ENCODE measurements at regions of chr3 and their contacts with region 1.

Region 1: GRCh38 chr3:120348981-120349818 is at the start of gene LRRC58:
- DNase-seq: peak; percentile 87
- H3K4me3 Mint-ChIP-seq: peak within 1 kb of the TSS; percentile 92
- H3K27ac Mint-ChIP-seq: peak within 1 kb of the TSS; percentile 88
- H3K4me1 Mint-ChIP-seq: peaks cover 46% of the 10 kb centered on the region
- H3K27me3 Mint-ChIP-seq: peaks cover 26% of the 10 kb centered on the region
- total RNA-seq, gene LRRC58: 26.9 and 27.4 TPM in 2 replicates

Region 2: GRCh38 chr3:119463171-119464169 is 885.7 kb before region 1 on chr3 and contains the start of gene TMEM39A:
- intact Hi-C with region 1: loop called (anchors 10 kb)
- DNase-seq: peak; percentile 98
- H3K4me3 Mint-ChIP-seq: peak within 1 kb of the TSS; percentile 98
- H3K27ac Mint-ChIP-seq: peak within 1 kb of the TSS; percentile 97
- H3K4me1 Mint-ChIP-seq: peaks cover 49% of the 10 kb centered on the region
- H3K27me3 Mint-ChIP-seq: peaks cover 3% of the 10 kb centered on the region
- total RNA-seq, gene TMEM39A: 51.3 and 56.9 TPM in 2 replicates

Region 3: GRCh38 chr3:119702530-119703157 is 646.6 kb before region 1 on chr3 and contains the start of gene CFAP91:
- intact Hi-C with region 1: loop called (anchors 5 kb)
- DNase-seq: peak; percentile 78
- H3K4me3 Mint-ChIP-seq: peak within 1 kb of the TSS; percentile 67
- H3K27ac Mint-ChIP-seq: no peak within 1 kb of the TSS
- H3K4me1 Mint-ChIP-seq: peaks cover 37% of the 10 kb centered on the region
- H3K27me3 Mint-ChIP-seq: peaks cover 29% of the 10 kb centered on the region
- total RNA-seq, gene CFAP91: 0.24 TPM in 1 of 2 replicates, not detected in the other

Region 4: DNA sequence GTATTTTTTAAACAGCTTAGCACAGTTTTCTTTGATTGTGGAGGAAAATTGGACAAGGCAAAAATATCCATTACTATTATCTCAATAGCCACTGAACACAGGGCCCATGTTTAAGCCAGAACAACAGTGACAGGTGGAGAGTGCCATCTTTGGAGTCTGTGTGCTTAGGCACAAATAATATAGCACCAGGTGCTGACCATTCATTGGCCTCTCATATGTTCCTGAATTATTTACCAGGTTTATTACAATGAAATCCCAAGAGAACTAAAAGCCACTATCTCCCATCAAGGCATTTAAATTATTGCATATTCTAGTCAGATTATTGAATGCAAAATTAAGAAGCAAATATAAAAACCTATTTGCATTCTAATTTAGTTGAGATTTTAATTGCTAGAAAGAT is 103.8 kb before region 1 on chr3:
- intact Hi-C with region 1: loop called (anchors 1 kb)
- DNase-seq: no peak
- H3K4me3 Mint-ChIP-seq: no peak overlapping the region
- H3K27ac Mint-ChIP-seq: no peak overlapping the region
- H3K4me1 Mint-ChIP-seq: no peaks in the 10 kb centered on the region
- H3K27me3 Mint-ChIP-seq: peaks cover 26% of the 10 kb centered on the region

Region 5: DNA sequence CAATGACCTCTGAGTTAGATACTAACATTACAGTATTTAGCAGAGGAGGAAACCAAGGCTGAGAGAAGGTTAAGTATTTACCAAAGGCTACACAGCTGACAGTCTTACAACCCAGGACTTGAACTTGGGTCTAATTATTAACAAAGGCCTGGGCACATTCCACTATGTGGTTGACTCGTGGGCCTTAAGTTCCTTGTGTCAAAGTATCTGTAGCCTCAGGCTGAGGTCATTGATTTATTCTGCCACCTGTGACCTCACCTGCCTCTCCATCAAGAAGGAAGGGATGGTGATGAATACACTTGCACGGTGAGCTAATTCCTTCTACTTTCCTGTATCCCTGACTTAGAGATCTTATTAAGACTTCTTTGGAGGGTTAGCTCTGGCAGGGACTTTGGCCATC is 19.8 kb after region 1 on chr3:
- intact Hi-C with region 1: no loop called
- DNase-seq: no peak
- H3K4me3 Mint-ChIP-seq: no peak overlapping the region
- H3K27ac Mint-ChIP-seq: no peak overlapping the region
- H3K4me1 Mint-ChIP-seq: no peaks in the 10 kb centered on the region
- H3K27me3 Mint-ChIP-seq: peaks cover 12% of the 10 kb centered on the region

Region 6: DNA sequence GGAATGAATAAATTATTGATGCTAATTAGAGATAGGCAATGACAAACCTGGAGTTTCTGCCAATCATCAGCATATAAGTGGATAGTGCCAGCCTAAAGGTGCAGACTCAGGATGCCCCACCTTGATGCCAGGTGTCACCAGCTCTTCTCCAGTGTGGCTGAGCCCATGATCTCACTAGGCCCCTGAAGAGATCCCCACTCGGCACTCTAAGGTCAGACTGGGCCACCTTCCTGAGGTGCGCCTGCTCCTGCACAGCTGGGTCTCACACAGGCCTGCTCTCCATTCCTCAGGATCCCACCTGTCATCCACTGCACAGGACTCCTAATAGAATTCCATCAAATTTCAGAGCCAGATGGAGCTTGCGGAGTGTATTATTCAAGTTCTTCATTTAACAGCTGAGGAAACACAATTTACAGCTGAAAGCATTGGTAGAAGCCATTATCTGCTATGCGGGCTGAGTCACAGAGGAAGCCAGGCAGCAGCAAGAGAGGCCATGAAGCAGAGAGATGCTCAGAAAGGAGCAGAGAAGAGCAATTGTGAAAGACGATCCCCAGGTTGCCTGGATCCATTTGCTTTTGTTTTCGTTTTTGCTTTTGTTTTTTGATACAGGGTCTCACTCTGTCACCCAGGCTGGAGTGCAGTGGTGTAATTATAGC is 126.7 kb after region 1 on chr3:
- intact Hi-C with region 1: no loop called
- DNase-seq: no peak
- H3K4me3 Mint-ChIP-seq: no peak overlapping the region
- H3K27ac Mint-ChIP-seq: no peak overlapping the region
- H3K4me1 Mint-ChIP-seq: no peaks in the 10 kb centered on the region
- H3K27me3 Mint-ChIP-seq: no peaks in the 10 kb centered on the region

Region 7: DNA sequence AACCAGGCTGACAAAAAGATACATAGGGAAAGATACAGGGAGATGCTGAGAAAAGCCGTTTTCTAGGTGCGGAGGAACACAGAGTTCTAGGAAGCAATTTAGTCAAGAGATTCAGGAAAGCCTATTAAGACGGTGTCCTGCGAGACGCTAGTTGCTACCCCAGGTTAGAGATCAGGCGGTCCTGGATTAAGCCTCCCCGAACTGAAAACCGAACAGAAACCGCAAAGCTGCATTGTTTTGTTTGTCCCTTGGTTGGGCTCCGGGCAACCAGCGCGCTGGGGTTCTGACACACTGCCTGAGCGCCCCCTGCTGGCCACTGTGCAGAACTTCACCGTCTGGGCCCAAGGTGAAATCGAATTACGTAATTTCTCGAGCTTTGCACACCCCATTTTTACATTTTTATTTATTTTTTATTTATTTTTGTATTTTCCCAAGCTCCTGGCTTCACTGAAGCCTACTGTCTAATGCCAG is 209.6 kb after region 1 on chr3:
- intact Hi-C with region 1: loop called (anchors 2 kb)
- DNase-seq: peak; percentile 81
- H3K4me3 Mint-ChIP-seq: peak overlapping the region; percentile 79
- H3K27ac Mint-ChIP-seq: peak overlapping the region; percentile 68
- H3K4me1 Mint-ChIP-seq: peaks cover 23% of the 10 kb centered on the region
- H3K27me3 Mint-ChIP-seq: peaks cover 2% of the 10 kb centered on the region

Region 8: GRCh38 chr3:120763601-120764000 is 414.4 kb after region 1 on chr3:
- intact Hi-C with region 1: no loop called
- DNase-seq: no peak
- H3K4me3 Mint-ChIP-seq: no peak overlapping the region
- H3K27ac Mint-ChIP-seq: no peak overlapping the region
- H3K4me1 Mint-ChIP-seq: peaks cover 27% of the 10 kb centered on the region
- H3K27me3 Mint-ChIP-seq: no peaks in the 10 kb centered on the region

Region 9: GRCh38 chr3:120795017-120795648 is 445.9 kb after region 1 on chr3:
- intact Hi-C with region 1: loop called (anchors 10 kb)
- DNase-seq: peak; percentile 63
- H3K4me3 Mint-ChIP-seq: no peak overlapping the region
- H3K27ac Mint-ChIP-seq: no peak overlapping the region
- H3K4me1 Mint-ChIP-seq: no peaks in the 10 kb centered on the region
- H3K27me3 Mint-ChIP-seq: peaks cover 6% of the 10 kb centered on the region

Measured in activated T-helper 1 cell treated with anti-CD3 and anti-CD28 coated beads, Interleukin-12 subunit alpha, Interleukin-12 subunit beta, Interleukin-2, Interleukin-4 antibody, amounts not matched to agents 30 ng/mL and 10 ng/mL and 1 ng/mL, durations not matched to agents 14 hours and 24 hours and 36 hours (primary cell).